Heart right ventricle (tissue), 16 donors: ENCODE measurements at regions of chr11 and their contacts with region 1.

Region 1: GRCh38 chr11:134780486-134781147 is 368.6 kb upstream of the B3GAT1 start:
- DNase-seq: no peak
- ATAC-seq: peak in 5 of 8 donors; percentile 41 to 75 (median 58)
- H3K4me3 ChIP-seq: no peak overlapping the region
- H3K27ac ChIP-seq: no peak overlapping the region
- H3K4me1 ChIP-seq: peaks cover 0 to 3% (median 0%) of the 10 kb centered on the region in 9 donors
- H3K27me3 ChIP-seq: peaks cover 0 to 25% (median 4%) of the 10 kb centered on the region in 7 donors
- CTCF ChIP-seq: no peak

Region 2: DNA sequence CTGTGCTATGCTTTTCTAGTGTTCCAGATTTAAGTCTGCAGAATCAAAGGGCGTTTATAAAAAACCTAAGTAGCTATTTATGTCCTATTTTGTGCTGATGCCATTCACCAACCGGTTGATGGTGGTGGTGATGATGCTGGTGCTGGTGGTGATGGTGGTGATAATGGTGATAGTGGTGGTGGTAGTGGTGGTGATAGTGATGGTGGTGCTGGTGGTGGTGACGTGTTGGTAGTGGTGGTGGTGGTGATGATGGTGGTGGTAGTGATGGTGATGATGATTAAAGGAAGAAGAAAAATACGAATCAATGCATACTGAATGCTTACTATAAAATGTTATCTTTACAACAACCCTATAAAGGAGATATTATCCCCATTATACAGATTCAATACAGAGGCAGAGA is 1426.5 kb before region 1 on chr11:
- intact Hi-C with region 1: loop called in 1 of 10 experiments (anchors 5 kb)
- DNase-seq: no peak
- ATAC-seq: no peak
- H3K4me3 ChIP-seq: no peak overlapping the region
- H3K27ac ChIP-seq: no peak overlapping the region
- H3K4me1 ChIP-seq: no peaks in the 10 kb centered on the region
- H3K27me3 ChIP-seq: peaks cover 0 to 6% (median 0%) of the 10 kb centered on the region in 7 donors
- CTCF ChIP-seq: no peak